ENCODE measurements at regions of chr10 and their contacts with region 1.

Region 1: GRCh38 chr10:128211953-128212727 is 85.9 kb upstream of the MKI67 start:
- DNase-seq: peak; percentile 85
- H3K4me3 Mint-ChIP-seq: peak overlapping the region; percentile 62
- H3K27ac Mint-ChIP-seq: peak overlapping the region; percentile 83
- H3K4me1 Mint-ChIP-seq: peaks cover 14% of the 10 kb centered on the region
- H3K27me3 Mint-ChIP-seq: peaks cover 3% of the 10 kb centered on the region

Region 2: DNA sequence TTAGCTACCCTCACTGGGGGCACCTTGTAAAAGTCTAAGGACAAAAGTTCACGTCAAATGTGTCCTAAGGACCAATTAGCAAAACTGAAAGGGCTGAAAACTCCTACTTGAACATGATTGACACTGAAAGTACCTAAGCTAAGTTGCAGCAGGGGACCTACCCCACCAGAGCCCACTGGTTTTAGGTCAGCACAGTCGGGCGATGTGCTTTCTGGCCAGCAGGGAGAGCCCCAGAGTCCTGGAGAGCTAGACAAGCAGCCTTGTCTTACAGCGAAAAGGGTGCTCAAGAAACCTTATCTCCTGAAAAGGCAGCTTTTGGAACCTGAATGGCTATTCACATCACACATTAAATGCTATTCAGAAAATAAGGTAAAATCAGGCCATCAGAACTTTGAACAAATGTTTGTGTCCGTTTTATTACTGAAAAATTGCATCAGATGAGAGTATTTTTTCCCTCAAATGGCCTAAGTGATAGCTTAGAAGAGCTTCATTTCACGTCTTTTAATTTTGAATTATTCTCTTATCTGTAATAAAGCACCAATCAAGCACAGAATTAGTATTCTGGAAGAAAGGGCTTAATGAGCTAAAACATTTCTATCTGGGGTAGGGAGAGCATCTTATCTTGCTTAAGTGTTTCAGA is 33.7 kb before region 1 on chr10:
- CTCF ChIA-PET with region 1: interaction called, 24 read pairs
- POLR2A ChIA-PET with region 1: no interaction called
- DNase-seq: peak; percentile 69
- H3K4me3 Mint-ChIP-seq: no peak overlapping the region
- H3K27ac Mint-ChIP-seq: no peak overlapping the region
- H3K4me1 Mint-ChIP-seq: peaks cover 40% of the 10 kb centered on the region
- H3K27me3 Mint-ChIP-seq: peaks cover 15% of the 10 kb centered on the region

Region 3: GRCh38 chr10:128186959-128187787 is 25.0 kb before region 1 on chr10:
- CTCF ChIA-PET with region 1: interaction called, 28 read pairs
- POLR2A ChIA-PET with region 1: no interaction called
- DNase-seq: peak; percentile 59
- H3K4me3 Mint-ChIP-seq: peak overlapping the region; percentile 65
- H3K27ac Mint-ChIP-seq: peak overlapping the region; percentile 86
- H3K4me1 Mint-ChIP-seq: peaks cover 40% of the 10 kb centered on the region
- H3K27me3 Mint-ChIP-seq: peaks cover 10% of the 10 kb centered on the region